Activated CD4-positive, alpha-beta T cell treated with anti-CD3 and anti-CD28 coated beads for 36 hours (primary cell): ENCODE measurements at regions of chr5 and their contacts with region 1.

Region 1: GRCh38 chr5:59039296-59040023 is 456.6 kb downstream of the RAB3C start:
- DNase-seq: peak; percentile 95
- ATAC-seq: peak; percentile 75
- H3K4me3 Mint-ChIP-seq: peak overlapping the region; percentile 86
- H3K27ac Mint-ChIP-seq: peak overlapping the region; percentile 88
- H3K4me1 Mint-ChIP-seq: peaks cover 39% of the 10 kb centered on the region
- H3K27me3 Mint-ChIP-seq: no peaks in the 10 kb centered on the region

Region 2: GRCh38 chr5:58918021-58918729 is 121.3 kb before region 1 on chr5:
- CTCF ChIA-PET with region 1: no interaction called
- POLR2A ChIA-PET with region 1: no interaction called
- intact Hi-C with region 1: no loop called
- DNase-seq: no peak
- ATAC-seq: no peak
- H3K4me3 Mint-ChIP-seq: no peak overlapping the region
- H3K27ac Mint-ChIP-seq: no peak overlapping the region
- H3K4me1 Mint-ChIP-seq: peaks cover 13% of the 10 kb centered on the region
- H3K27me3 Mint-ChIP-seq: peaks cover 2% of the 10 kb centered on the region

Region 3: DNA sequence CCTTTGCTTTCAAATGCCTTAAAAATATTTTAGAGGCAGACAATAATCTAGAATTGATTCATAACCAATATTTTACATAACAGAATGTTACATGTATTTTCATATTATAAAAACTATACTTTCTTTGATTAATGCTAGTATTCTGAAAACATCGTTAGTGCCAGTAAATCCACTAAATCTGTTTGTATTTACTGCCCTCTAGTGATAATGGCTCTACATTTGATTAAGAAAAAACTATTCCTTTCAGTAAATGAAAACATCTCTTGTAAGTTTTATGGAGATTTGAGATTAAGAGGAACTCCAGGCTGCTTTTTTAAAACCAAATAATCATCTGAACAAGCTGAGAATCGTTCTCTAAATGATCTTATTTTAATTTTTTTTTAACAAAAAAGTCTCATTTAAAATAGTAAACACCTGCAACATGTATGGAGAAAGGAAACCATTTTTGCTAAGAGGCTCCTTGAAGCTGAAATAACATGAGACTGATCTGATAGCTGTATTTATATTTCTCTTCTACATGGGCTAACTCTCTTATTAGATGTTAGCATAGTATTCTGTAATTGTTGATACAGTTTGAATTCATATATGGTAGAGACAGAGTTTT is 31.9 kb before region 1 on chr5:
- CTCF ChIA-PET with region 1: interaction called, 11 read pairs
- POLR2A ChIA-PET with region 1: no interaction called
- intact Hi-C with region 1: loop called in 1 of 2 experiments (anchors 5 kb)
- DNase-seq: no peak
- ATAC-seq: no peak
- H3K4me3 Mint-ChIP-seq: no peak overlapping the region
- H3K27ac Mint-ChIP-seq: no peak overlapping the region
- H3K4me1 Mint-ChIP-seq: peaks cover 73% of the 10 kb centered on the region
- H3K27me3 Mint-ChIP-seq: no peaks in the 10 kb centered on the region

Region 4: DNA sequence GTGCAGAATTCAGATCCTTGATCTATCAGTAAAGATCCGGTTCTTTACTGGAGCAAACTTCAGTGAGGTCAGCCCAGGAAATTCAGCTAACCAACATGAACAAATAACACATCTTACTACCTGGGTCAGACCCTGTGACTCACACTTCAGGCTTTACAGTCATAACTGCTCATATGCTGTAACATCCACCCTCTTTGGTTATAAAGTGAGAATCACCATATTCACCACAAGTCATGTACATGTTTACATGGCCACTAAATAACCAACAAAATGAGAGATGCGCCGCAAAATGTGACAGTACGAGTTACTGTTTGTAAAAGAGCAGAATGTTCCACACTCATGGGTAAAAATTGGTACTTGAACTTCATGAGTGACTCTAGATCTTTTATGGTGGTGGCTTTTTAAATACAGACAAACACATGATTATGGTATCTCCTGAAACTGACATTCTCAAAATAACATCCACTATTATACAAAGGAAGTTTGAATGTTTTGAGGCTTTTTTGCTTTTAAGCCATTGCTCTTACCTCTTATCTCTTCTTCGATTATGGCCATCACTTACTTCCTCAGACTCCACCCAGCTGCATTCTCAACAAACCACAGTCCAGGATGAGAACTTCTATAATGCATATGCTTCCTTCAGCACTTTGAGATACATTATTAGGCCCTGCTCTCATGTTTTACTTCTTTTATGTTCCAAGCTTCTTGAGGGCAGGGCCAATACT is 60.0 kb after region 1 on chr5:
- CTCF ChIA-PET with region 1: interaction called, 13 read pairs
- POLR2A ChIA-PET with region 1: no interaction called
- intact Hi-C with region 1: loop called (anchors 1 kb)
- DNase-seq: peak; percentile 64
- ATAC-seq: peak; percentile 96
- H3K4me3 Mint-ChIP-seq: peak overlapping the region; percentile 17
- H3K27ac Mint-ChIP-seq: peak overlapping the region; percentile 79
- H3K4me1 Mint-ChIP-seq: peaks cover 45% of the 10 kb centered on the region
- H3K27me3 Mint-ChIP-seq: peaks cover 2% of the 10 kb centered on the region

Region 5: GRCh38 chr5:59174248-59174844 is 134.9 kb after region 1 on chr5:
- CTCF ChIA-PET with region 1: interaction called, 84 read pairs
- POLR2A ChIA-PET with region 1: no interaction called
- intact Hi-C with region 1: loop called (anchors 1 kb)
- DNase-seq: peak; percentile 47
- ATAC-seq: peak; percentile 72
- H3K4me3 Mint-ChIP-seq: no peak overlapping the region
- H3K27ac Mint-ChIP-seq: no peak overlapping the region
- H3K4me1 Mint-ChIP-seq: peaks cover 16% of the 10 kb centered on the region
- H3K27me3 Mint-ChIP-seq: no peaks in the 10 kb centered on the region

Region 6: GRCh38 chr5:59380350-59380951 is 341.0 kb after region 1 on chr5:
- CTCF ChIA-PET with region 1: no interaction called
- POLR2A ChIA-PET with region 1: no interaction called
- intact Hi-C with region 1: loop called in 1 of 2 experiments (anchors 5 kb)
- DNase-seq: peak; percentile 26
- ATAC-seq: peak; percentile 87
- H3K4me3 Mint-ChIP-seq: no peak overlapping the region
- H3K27ac Mint-ChIP-seq: no peak overlapping the region
- H3K4me1 Mint-ChIP-seq: no peaks in the 10 kb centered on the region
- H3K27me3 Mint-ChIP-seq: no peaks in the 10 kb centered on the region

Region 7: GRCh38 chr5:60699530-60700382 is 1660.3 kb after region 1 on chr5 and contains the start of gene DEPDC1B:
- CTCF ChIA-PET with region 1: no interaction called
- POLR2A ChIA-PET with region 1: no interaction called
- intact Hi-C with region 1: loop called in 1 of 2 experiments (anchors 10 kb)
- DNase-seq: peak; percentile 94
- ATAC-seq: peak; percentile 97
- H3K4me3 Mint-ChIP-seq: peak within 1 kb of the TSS; percentile 84
- H3K27ac Mint-ChIP-seq: peak within 1 kb of the TSS; percentile 88
- H3K4me1 Mint-ChIP-seq: peaks cover 16% of the 10 kb centered on the region
- H3K27me3 Mint-ChIP-seq: peaks cover 2% of the 10 kb centered on the region
- total RNA-seq, gene DEPDC1B: 34.2 to 40.3 TPM